CD4-positive, alpha-beta T cell (primary cell): ENCODE measurements at regions of chr10 and their contacts with region 1.

Region 1: GRCh38 chr10:31864834-31865518 is 63.7 kb downstream of the ARHGAP12 start:
- DNase-seq: no peak
- ATAC-seq: no peak
- H3K4me3 ChIP-seq: no peak overlapping the region
- H3K4me3 Mint-ChIP-seq: no peak overlapping the region
- H3K27ac ChIP-seq: no peak overlapping the region
- H3K27ac Mint-ChIP-seq: peak overlapping the region; percentile 12
- H3K4me1 ChIP-seq: no peaks in the 10 kb centered on the region
- H3K4me1 Mint-ChIP-seq: peaks cover 39% of the 10 kb centered on the region
- H3K27me3 ChIP-seq: no peaks in the 10 kb centered on the region
- H3K27me3 Mint-ChIP-seq: no peaks in the 10 kb centered on the region
- CTCF ChIP-seq: no peak

Region 2: DNA sequence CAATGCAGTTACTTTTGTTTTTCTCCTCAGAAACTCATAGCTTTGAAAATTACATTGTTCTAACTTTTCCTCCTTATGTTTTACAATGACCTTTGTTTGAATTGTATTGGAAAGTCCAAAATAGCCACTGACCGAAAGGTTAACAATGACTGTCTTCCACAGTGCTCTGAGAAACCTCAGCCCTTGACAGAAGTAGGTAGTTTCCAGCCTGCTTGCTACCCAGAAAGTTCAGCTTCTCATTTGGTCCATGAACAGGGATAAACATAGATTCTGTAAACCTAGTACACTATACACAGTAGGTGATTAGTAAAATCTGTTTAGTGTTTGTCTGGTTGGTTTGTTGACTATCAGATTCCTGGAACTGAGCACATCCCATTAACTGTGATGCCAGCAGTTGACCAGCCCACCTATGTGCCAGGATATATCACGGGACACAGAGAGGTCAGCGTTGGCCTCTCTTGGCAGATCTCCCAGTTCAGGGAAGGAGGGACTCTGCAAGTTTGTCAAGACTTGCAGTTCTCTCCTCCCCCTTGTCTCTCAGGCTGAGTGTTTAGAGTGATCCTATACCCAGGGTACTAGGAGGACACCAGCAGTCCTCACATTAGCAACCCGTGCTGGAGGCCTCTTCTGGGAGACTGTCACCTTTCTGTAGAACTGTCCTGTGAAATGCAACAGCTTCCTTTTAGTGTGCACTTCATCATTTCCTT is 234.0 kb before region 1 on chr10:
- CTCF ChIA-PET with region 1: no interaction called
- POLR2A ChIA-PET with region 1: no interaction called
- intact Hi-C with region 1: no loop called
- DNase-seq: no peak
- ATAC-seq: no peak
- H3K4me3 ChIP-seq: no peak overlapping the region
- H3K4me3 Mint-ChIP-seq: no peak overlapping the region
- H3K27ac ChIP-seq: no peak overlapping the region
- H3K27ac Mint-ChIP-seq: no peak overlapping the region
- H3K4me1 ChIP-seq: no peaks in the 10 kb centered on the region
- H3K4me1 Mint-ChIP-seq: no peaks in the 10 kb centered on the region
- H3K27me3 ChIP-seq: peaks cover 0 to 5% of the 10 kb centered on the region in 2 experiments
- H3K27me3 Mint-ChIP-seq: peaks cover 15% of the 10 kb centered on the region
- CTCF ChIP-seq: no peak

Region 3: GRCh38 chr10:31947144-31947926 is 82.4 kb after region 1 on chr10:
- CTCF ChIA-PET with region 1: no interaction called
- POLR2A ChIA-PET with region 1: no interaction called
- intact Hi-C with region 1: loop called in 1 of 2 experiments (anchors 5 kb)
- DNase-seq: no peak
- ATAC-seq: no peak
- H3K4me3 ChIP-seq: no peak overlapping the region
- H3K4me3 Mint-ChIP-seq: no peak overlapping the region
- H3K27ac ChIP-seq: no peak overlapping the region
- H3K27ac Mint-ChIP-seq: no peak overlapping the region
- H3K4me1 ChIP-seq: peaks cover 3% of the 10 kb centered on the region
- H3K4me1 Mint-ChIP-seq: no peaks in the 10 kb centered on the region
- H3K27me3 ChIP-seq: no peaks in the 10 kb centered on the region
- H3K27me3 Mint-ChIP-seq: no peaks in the 10 kb centered on the region
- CTCF ChIP-seq: peak; percentile 18

Region 4: DNA sequence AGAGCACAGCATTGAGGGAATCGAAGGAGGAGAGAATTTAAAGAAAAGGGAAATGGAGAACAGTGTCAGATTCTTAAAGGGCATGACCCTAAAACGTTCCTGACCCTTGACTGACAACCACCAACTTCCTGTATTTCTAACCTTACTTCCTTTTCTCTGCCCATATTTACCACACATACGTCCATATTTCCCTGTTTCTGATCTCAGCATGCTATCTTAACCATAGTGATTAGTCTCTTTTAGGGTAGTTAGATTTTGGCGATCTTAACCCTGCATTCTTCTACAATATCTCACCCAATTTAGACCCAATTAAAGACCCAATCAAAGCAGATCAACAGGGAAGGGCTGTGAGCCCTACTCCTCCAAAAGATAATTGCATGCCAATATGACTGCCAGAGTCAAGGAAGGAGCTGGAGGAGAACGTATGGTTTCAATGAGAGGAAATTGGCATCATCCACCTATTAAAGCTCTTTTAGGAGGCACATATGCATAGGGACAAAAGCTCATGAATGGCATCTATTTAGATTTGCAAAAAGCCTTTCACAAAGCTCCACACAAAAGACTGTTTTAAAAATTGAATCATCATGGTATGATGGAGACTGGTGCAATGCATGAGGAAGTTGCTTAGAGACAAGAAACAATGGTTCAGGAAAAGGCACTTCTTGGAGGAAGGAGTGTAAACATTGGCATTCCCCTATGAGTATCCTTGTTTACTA is 112.6 kb after region 1 on chr10:
- CTCF ChIA-PET with region 1: no interaction called
- POLR2A ChIA-PET with region 1: no interaction called
- intact Hi-C with region 1: no loop called
- DNase-seq: peak in 3 of 14 experiments; percentile 39 to 50 (median 39)
- ATAC-seq: peak; percentile 51
- H3K4me3 ChIP-seq: no peak overlapping the region
- H3K4me3 Mint-ChIP-seq: no peak overlapping the region
- H3K27ac ChIP-seq: no peak overlapping the region
- H3K27ac Mint-ChIP-seq: no peak overlapping the region
- H3K4me1 ChIP-seq: peaks cover 11% of the 10 kb centered on the region
- H3K4me1 Mint-ChIP-seq: peaks cover 36% of the 10 kb centered on the region
- H3K27me3 ChIP-seq: no peaks in the 10 kb centered on the region
- H3K27me3 Mint-ChIP-seq: no peaks in the 10 kb centered on the region
- CTCF ChIP-seq: no peak

Region 5: DNA sequence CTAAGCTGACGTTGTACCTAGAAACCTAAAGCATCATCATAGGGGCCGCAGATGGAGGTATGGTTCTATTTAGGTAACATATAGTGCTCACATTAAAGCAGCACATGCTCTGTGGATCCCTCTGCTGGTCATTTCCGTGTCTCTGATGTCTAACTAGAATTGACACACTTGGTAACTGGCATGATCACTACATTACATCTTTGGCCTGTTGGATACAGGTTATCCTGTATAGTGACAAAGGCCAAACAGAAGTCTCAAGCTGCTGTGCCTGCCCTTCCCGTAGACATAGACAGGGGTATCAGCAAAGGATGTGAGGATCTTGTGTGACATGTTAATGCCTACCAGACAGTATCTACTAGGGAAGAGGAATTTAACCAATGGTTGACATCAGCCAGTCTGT is 140.1 kb after region 1 on chr10:
- CTCF ChIA-PET with region 1: interaction called, 7 read pairs
- POLR2A ChIA-PET with region 1: interaction called, 18 read pairs
- intact Hi-C with region 1: loop called (anchors 1 kb)
- DNase-seq: peak in 10 of 14 experiments; percentile 2 to 68 (median 34)
- ATAC-seq: peak; percentile 81
- H3K4me3 ChIP-seq: no peak overlapping the region
- H3K4me3 Mint-ChIP-seq: no peak overlapping the region
- H3K27ac ChIP-seq: no peak overlapping the region
- H3K27ac Mint-ChIP-seq: peak overlapping the region; percentile 58
- H3K4me1 ChIP-seq: no peaks in the 10 kb centered on the region
- H3K4me1 Mint-ChIP-seq: peaks cover 16% of the 10 kb centered on the region
- H3K27me3 ChIP-seq: no peaks in the 10 kb centered on the region
- H3K27me3 Mint-ChIP-seq: no peaks in the 10 kb centered on the region
- CTCF ChIP-seq: peak; percentile 67

Region 6: GRCh38 chr10:32207544-32207943 is 342.6 kb after region 1 on chr10:
- CTCF ChIA-PET with region 1: no interaction called
- POLR2A ChIA-PET with region 1: interaction called, 3 read pairs
- intact Hi-C with region 1: loop called (anchors 5 kb)
- DNase-seq: peak; percentile 27 to 75 (median 46)
- ATAC-seq: peak; percentile 86
- H3K4me3 ChIP-seq: no peak overlapping the region
- H3K4me3 Mint-ChIP-seq: no peak overlapping the region
- H3K27ac ChIP-seq: no peak overlapping the region
- H3K27ac Mint-ChIP-seq: no peak overlapping the region
- H3K4me1 ChIP-seq: peaks cover 7% of the 10 kb centered on the region
- H3K4me1 Mint-ChIP-seq: peaks cover 5% of the 10 kb centered on the region
- H3K27me3 ChIP-seq: no peaks in the 10 kb centered on the region
- H3K27me3 Mint-ChIP-seq: no peaks in the 10 kb centered on the region
- CTCF ChIP-seq: peak; percentile 68